Prostate gland (tissue), 2 donors: ENCODE measurements at regions of chr1 and their contacts with region 1.

Region 1: DNA sequence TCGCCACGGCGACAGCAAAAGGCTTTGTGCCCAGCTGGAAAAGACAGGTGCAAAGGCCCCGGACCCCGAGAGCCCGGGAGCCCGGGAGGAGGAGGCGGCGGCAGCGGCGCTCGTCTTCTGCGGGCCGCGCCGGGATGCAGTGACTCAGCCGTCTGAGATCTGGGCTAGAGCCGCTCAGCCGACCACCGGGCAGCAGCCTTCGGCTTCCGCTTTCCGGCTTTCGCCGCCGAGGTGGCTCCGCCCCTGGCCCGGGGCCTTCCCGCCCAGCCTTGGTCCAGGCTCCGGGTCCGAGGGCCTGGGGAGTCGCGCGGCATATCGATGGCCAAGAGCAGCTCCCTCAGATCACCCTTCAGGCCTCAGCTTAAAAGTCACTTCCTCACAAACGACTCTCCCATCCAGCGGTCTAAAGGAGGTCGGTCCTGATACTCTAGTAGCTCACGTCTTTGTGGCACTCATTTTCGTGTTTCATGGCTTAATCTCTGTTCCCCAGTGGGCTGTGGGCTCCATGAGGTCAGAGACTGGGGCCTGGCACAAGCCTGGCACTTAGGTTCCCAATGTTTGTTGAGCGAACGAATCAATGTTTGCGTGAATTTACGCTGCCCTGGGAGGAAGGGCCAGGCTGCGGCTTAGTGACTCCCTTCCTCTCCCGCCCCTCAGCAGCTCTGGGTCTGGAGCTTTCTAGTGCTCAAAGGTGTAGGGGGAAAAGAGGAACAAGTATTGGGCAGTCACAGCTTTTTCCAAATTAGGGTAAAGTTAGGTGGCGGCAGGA is at the start of gene PHTF1:
- DNase-seq: peak; percentile 43
- H3K4me3 ChIP-seq: peak within 1 kb of the TSS; percentile 59 to 85
- H3K27ac ChIP-seq: peak within 1 kb of the TSS; percentile 82 to 93
- H3K4me1 ChIP-seq: no peaks in the 10 kb centered on the region
- H3K27me3 ChIP-seq: no peaks in the 10 kb centered on the region
- CTCF ChIP-seq: no peak
- POLR2A ChIP-seq: peak; percentile 36
- total RNA-seq, gene PHTF1: 11.7 to 13.4 TPM

Region 2: GRCh38 chr1:113507552-113508214 is 251.8 kb before region 1 on chr1:
- intact Hi-C with region 1: no loop called
- DNase-seq: no peak
- H3K4me3 ChIP-seq: no peak overlapping the region
- H3K27ac ChIP-seq: no peak overlapping the region
- H3K4me1 ChIP-seq: no peaks in the 10 kb centered on the region
- H3K27me3 ChIP-seq: no peaks in the 10 kb centered on the region
- CTCF ChIP-seq: no peak
- POLR2A ChIP-seq: no peak

Region 3: DNA sequence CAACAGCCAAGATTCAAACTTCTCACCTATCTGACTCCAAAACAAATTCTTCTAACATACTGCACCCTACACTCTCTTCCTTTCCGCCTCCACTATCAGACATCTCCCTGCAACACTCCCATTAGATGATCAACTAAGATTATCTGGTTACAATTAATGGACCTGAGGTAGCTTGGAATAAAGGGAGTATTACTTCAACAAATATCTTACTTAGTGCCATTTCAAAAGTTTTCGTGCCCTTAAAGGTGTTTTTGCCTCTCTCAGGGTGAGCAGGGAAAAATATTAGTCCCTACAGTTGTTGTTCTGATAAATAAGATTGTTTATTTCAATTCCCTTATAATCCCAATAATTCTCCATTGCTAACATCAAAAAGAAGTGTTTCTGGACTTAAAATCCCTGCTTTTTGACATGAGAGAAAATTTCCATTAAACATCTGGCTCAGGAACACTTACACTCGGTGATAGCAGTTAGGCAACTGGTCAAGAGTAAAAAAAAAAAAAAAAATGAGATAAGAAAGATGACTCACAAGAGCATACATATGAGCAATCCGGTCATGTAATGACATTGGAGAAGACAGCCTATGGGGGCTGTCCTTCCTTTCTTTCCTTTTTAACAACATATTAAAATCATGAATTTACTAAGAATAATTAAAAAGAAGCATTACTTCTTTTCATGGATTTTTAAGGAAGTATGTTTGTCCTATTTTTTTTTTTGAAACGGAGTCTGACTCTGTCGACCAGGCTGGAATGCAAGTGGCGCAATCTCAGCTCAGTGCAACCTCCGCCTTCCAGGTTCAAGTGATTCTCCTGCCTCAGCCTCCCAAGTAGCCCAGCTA is 45.1 kb after region 1 on chr1:
- intact Hi-C with region 1: loop called (anchors 5 kb)
- DNase-seq: no peak
- H3K4me3 ChIP-seq: no peak overlapping the region
- H3K27ac ChIP-seq: no peak overlapping the region
- H3K4me1 ChIP-seq: no peaks in the 10 kb centered on the region
- H3K27me3 ChIP-seq: no peaks in the 10 kb centered on the region
- CTCF ChIP-seq: no peak
- POLR2A ChIP-seq: no peak

Region 4: DNA sequence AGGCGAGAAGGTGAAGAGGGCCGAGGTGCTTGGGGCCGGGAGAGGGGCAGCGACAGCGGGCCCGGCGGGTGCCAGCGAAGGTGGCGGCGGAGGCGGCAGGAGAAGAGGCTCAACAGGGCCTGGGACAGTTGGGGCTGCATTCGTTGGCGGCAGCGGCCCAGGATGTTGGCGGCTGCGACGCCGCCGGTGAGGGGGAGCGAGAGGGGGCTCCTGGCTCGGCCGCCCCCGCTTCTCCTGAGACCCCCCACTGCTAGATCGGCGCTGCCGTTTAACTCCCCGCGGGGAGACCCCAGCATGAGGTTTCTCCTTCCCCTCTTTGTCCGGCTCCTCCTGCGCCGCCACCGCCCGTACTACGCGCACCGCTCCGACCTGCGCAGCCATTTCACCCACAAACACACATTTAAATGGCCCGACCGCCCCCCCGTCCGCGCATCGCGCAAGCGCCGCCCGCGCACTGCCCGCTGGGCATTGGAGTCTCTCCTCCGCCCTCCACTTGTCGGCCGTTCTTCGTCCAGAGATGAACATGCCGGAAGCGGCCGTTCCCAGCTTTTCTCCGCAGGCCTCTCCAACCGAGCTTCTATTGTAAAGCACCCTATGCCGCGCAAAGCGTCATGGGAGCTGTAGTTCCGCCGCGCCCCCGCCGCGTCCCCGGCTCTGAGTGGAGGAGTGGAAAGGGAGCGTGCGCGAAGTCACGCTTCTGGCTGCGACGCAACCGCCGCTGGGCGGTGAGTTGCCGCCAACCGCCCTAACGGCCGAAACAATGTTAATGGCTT is 52.6 kb after region 1 on chr1 and contains the start of gene RSBN1:
- intact Hi-C with region 1: loop called (anchors 5 kb)
- DNase-seq: peak; percentile 99
- H3K4me3 ChIP-seq: peak within 1 kb of the TSS; percentile 76 to 94
- H3K27ac ChIP-seq: peak within 1 kb of the TSS; percentile 90 to 94
- H3K4me1 ChIP-seq: no peaks in the 10 kb centered on the region
- H3K27me3 ChIP-seq: no peaks in the 10 kb centered on the region
- CTCF ChIP-seq: peak in 2 of 4 experiments; percentile 40 to 53
- POLR2A ChIP-seq: peak; percentile 97
- total RNA-seq, gene RSBN1: 23.1 to 24.0 TPM

Region 5: DNA sequence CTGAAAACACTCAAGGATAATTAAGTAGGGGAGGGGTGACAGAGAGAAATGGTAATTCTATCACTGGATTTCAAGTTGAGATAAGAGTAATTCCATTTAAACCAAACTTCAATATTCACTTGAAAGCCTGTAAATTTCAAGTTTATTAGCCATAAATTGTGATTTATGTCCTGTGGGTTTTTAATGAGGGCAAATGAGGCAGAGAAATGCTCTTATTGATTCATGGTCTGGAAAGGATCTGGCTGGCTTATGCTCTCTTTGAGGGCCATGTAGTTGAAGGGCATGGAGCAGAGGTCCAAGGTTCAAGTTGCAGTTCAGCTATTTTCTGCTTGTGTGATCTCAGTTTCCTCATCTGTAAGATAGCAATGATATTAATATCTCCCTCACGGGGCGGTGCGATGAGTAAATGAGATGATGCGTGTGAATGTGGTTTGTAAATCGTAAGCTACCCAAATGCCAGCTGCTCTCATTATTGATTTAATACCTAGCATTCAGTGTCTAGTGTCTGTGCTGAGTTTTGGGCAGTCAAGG is 232.0 kb after region 1 on chr1:
- intact Hi-C with region 1: no loop called
- DNase-seq: no peak
- H3K4me3 ChIP-seq: no peak overlapping the region
- H3K27ac ChIP-seq: no peak overlapping the region
- H3K4me1 ChIP-seq: no peaks in the 10 kb centered on the region
- H3K27me3 ChIP-seq: no peaks in the 10 kb centered on the region
- CTCF ChIP-seq: no peak
- POLR2A ChIP-seq: no peak

Region 6: DNA sequence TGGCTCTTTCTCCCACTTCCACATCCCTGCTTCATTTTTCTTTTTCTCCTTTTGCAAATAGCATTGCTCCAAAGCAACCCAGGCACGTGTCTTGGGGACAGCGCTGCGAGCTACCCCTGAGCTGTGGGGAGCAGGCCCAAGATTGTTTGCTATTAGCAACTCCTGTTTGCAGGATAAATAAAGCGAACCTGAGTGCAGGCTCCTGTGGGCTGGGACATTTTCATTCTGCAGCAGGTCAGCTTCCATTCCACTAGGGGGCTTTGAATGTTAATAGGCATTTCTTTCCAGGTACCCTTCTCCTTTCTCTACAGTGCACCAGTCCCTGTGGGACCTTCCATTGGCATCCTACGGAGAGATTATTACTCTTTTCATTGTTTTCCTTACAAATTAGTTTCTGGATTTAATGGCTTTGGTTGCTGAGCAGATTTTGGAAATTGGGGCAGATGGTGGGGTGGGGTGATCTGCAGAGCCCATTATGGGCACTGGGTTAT is 273.7 kb after region 1 on chr1:
- intact Hi-C with region 1: no loop called
- DNase-seq: no peak
- H3K4me3 ChIP-seq: no peak overlapping the region
- H3K27ac ChIP-seq: no peak overlapping the region
- H3K4me1 ChIP-seq: no peaks in the 10 kb centered on the region
- H3K27me3 ChIP-seq: no peaks in the 10 kb centered on the region
- CTCF ChIP-seq: peak in 1 of 4 experiments; percentile 26
- POLR2A ChIP-seq: no peak